ENCODE measurements at regions of chr7 and their contacts with region 1.

Region 1: GRCh38 chr7:106659963-106660861 is 746 bp downstream of the CCDC71L start:
- DNase-seq: peak; percentile 30 to 90
- H3K4me3 ChIP-seq: peak overlapping the region; percentile 93 to 99
- H3K27ac ChIP-seq: peak overlapping the region; percentile 96 to 99
- H3K4me1 ChIP-seq: peaks cover 4 to 13% of the 10 kb centered on the region in 2 donors
- H3K27me3 ChIP-seq: no peaks in the 10 kb centered on the region
- CTCF ChIP-seq: peak; percentile 50 to 77 (median 73)

Region 2: GRCh38 chr7:106112117-106112971 is 547.9 kb before region 1 on chr7 and contains the start of gene SYPL1:
- intact Hi-C with region 1: loop called (anchors 5 kb)
- DNase-seq: peak; percentile 70 to 95
- H3K4me3 ChIP-seq: peak within 1 kb of the TSS; percentile 69 to 76
- H3K27ac ChIP-seq: peak within 1 kb of the TSS; percentile 98
- H3K4me1 ChIP-seq: peaks cover 3 to 12% of the 10 kb centered on the region in 2 donors
- H3K27me3 ChIP-seq: no peaks in the 10 kb centered on the region
- CTCF ChIP-seq: peak in 1 of 3 experiments; percentile 16
- total RNA-seq, gene SYPL1: 17.5 TPM

Region 3: DNA sequence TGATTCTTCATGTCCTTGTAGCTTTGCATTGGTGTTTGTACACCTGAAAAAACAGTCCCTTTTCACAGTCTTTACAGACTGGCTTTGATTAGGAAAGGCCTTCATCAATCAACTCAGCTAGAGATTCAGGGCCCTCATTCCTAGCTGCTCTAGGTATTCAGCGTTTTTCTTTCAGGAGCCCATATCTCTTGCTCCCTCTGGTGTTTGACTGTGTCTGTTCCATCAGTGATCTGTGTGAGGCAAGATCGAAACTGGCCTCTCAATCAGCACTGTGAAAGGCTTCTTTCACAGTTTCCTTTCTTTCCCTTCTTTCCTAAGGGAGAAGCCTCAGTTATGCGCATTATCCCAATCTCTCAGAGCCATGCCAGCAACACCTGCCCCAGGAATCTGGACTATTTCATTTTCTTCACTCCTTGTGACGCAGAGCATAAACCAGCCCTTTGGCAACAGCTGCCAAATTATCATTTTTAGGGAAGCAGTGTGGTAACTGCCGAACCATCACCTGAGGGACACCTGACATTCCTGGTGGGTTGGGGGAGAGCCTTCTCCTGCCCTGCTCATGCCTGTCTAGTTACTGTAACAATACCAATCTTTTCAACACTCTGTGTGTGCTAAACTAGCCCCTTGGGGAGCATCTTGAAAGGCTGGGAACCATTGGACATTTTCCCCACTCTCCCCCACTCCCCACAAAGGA is 76.4 kb after region 1 on chr7:
- intact Hi-C with region 1: loop called (anchors 1 kb)
- DNase-seq: no peak
- H3K4me3 ChIP-seq: no peak overlapping the region
- H3K27ac ChIP-seq: no peak overlapping the region
- H3K4me1 ChIP-seq: no peaks in the 10 kb centered on the region
- H3K27me3 ChIP-seq: no peaks in the 10 kb centered on the region
- CTCF ChIP-seq: peak; percentile 16 to 53 (median 44)

Region 4: GRCh38 chr7:107579885-107580715 is 919.9 kb after region 1 on chr7 and contains the start of gene BCAP29:
- intact Hi-C with region 1: loop called (anchors 5 kb)
- DNase-seq: peak; percentile 19 to 89
- H3K4me3 ChIP-seq: peak within 1 kb of the TSS; percentile 84 to 91
- H3K27ac ChIP-seq: peak within 1 kb of the TSS; percentile 93 to 97
- H3K4me1 ChIP-seq: peaks cover 0 to 11% of the 10 kb centered on the region in 2 donors
- H3K27me3 ChIP-seq: no peaks in the 10 kb centered on the region
- CTCF ChIP-seq: peak; percentile 22 to 50 (median 29)
- total RNA-seq, gene BCAP29: 73.2 TPM